ENCODE measurements at regions of chr2 and their contacts with region 1.

Region 1: GRCh38 chr2:264660-265468 is at the start of gene ACP1:
- DNase-seq: peak; percentile 94 to 100
- ATAC-seq: peak; percentile 84 to 88 (median 85)
- H3K4me3 ChIP-seq: peak within 1 kb of the TSS; percentile 94
- H3K4me3 Mint-ChIP-seq: peak within 1 kb of the TSS; percentile 98
- H3K27ac ChIP-seq: peak within 1 kb of the TSS; percentile 85
- H3K27ac Mint-ChIP-seq: peak within 1 kb of the TSS; percentile 92 to 98
- H3K4me1 ChIP-seq: peaks cover 21% of the 10 kb centered on the region
- H3K4me1 Mint-ChIP-seq: peaks cover 45 to 52% of the 10 kb centered on the region in 2 donors
- H3K27me3 ChIP-seq: no peaks in the 10 kb centered on the region
- H3K27me3 Mint-ChIP-seq: no peaks in the 10 kb centered on the region
- CTCF ChIP-seq: no peak
- total RNA-seq, gene ACP1: 87.2 to 104 (median 102) TPM

Region 2: GRCh38 chr2:254241-254640 is 10.6 kb before region 1 on chr2:
- intact Hi-C with region 1: no loop called
- DNase-seq: no peak
- ATAC-seq: no peak
- H3K4me3 ChIP-seq: no peak overlapping the region
- H3K4me3 Mint-ChIP-seq: no peak overlapping the region
- H3K27ac ChIP-seq: no peak overlapping the region
- H3K27ac Mint-ChIP-seq: no peak overlapping the region
- H3K4me1 ChIP-seq: no peaks in the 10 kb centered on the region
- H3K4me1 Mint-ChIP-seq: no peaks in the 10 kb centered on the region
- H3K27me3 ChIP-seq: no peaks in the 10 kb centered on the region
- H3K27me3 Mint-ChIP-seq: no peaks in the 10 kb centered on the region
- CTCF ChIP-seq: no peak

Region 3: GRCh38 chr2:275466-275865 is 10.6 kb after region 1 on chr2:
- intact Hi-C with region 1: no loop called
- DNase-seq: no peak
- ATAC-seq: no peak
- H3K4me3 ChIP-seq: no peak overlapping the region
- H3K4me3 Mint-ChIP-seq: no peak overlapping the region
- H3K27ac ChIP-seq: no peak overlapping the region
- H3K27ac Mint-ChIP-seq: no peak overlapping the region
- H3K4me1 ChIP-seq: peaks cover 2% of the 10 kb centered on the region
- H3K4me1 Mint-ChIP-seq: peaks cover 19 to 23% of the 10 kb centered on the region in 2 donors
- H3K27me3 ChIP-seq: no peaks in the 10 kb centered on the region
- H3K27me3 Mint-ChIP-seq: no peaks in the 10 kb centered on the region
- CTCF ChIP-seq: no peak

Region 4: DNA sequence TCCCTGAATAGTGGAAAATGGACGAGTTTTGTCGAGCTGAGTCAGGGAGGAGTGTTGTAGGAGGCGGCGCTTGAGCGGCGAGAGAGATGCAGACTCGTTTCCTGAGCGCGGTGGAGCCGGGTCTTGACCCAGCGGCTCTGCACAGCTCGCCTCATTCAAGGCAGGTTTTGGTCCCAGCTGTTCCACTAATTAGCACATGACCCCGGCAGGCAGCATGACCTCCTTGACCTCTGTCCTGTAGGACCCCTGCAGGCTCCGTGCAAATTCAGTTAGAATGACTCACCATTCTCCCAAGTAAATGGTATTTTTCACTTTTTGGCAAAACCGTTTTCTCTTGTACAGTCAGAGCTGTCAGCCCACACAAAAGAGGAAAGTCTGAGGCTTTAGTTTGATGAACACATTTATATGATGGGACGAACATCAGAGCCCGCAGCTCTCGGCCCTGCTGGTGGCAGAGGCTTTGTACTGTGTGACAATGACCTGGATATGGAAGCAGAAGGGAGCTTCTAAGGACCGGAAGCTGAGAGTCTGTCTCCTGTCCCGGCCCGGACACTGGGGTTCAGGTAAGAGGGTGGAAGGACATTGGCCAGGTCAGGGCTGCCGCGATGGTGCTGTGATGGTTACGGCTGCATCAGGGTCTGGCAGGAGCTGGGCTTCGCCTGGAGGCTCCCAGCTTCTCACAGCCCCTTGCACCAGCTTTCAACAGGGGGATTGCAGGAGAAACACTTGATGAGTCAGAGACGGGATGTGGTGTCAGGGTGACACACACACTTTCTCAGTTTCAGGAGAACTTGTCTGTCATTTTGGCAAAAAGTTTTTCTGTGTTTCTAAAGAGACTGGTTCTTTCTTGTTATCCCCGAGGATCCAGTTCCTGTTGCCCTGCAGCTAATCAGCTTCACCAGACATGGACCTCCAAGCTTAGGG is 52.9 kb after region 1 on chr2:
- intact Hi-C with region 1: no loop called
- DNase-seq: peak; percentile 28 to 59
- ATAC-seq: peak; percentile 69 to 91 (median 83)
- H3K4me3 ChIP-seq: no peak overlapping the region
- H3K4me3 Mint-ChIP-seq: peak overlapping the region; percentile 86
- H3K27ac ChIP-seq: no peak overlapping the region
- H3K27ac Mint-ChIP-seq: peak overlapping the region; percentile 65 to 80
- H3K4me1 ChIP-seq: peaks cover 23% of the 10 kb centered on the region
- H3K4me1 Mint-ChIP-seq: peaks cover 23% of the 10 kb centered on the region in 2 donors
- H3K27me3 ChIP-seq: no peaks in the 10 kb centered on the region
- H3K27me3 Mint-ChIP-seq: peaks cover 5 to 16% of the 10 kb centered on the region in 2 donors
- CTCF ChIP-seq: no peak

Region 5: GRCh38 chr2:415986-416610 is 151.2 kb after region 1 on chr2:
- intact Hi-C with region 1: no loop called
- DNase-seq: no peak
- ATAC-seq: no peak
- H3K4me3 ChIP-seq: no peak overlapping the region
- H3K4me3 Mint-ChIP-seq: no peak overlapping the region
- H3K27ac ChIP-seq: no peak overlapping the region
- H3K27ac Mint-ChIP-seq: no peak overlapping the region
- H3K4me1 ChIP-seq: peaks cover 9% of the 10 kb centered on the region
- H3K4me1 Mint-ChIP-seq: peaks cover 1 to 4% of the 10 kb centered on the region in 2 donors
- H3K27me3 ChIP-seq: no peaks in the 10 kb centered on the region
- H3K27me3 Mint-ChIP-seq: peaks cover 21 to 42% of the 10 kb centered on the region in 2 donors
- CTCF ChIP-seq: no peak

Region 6: DNA sequence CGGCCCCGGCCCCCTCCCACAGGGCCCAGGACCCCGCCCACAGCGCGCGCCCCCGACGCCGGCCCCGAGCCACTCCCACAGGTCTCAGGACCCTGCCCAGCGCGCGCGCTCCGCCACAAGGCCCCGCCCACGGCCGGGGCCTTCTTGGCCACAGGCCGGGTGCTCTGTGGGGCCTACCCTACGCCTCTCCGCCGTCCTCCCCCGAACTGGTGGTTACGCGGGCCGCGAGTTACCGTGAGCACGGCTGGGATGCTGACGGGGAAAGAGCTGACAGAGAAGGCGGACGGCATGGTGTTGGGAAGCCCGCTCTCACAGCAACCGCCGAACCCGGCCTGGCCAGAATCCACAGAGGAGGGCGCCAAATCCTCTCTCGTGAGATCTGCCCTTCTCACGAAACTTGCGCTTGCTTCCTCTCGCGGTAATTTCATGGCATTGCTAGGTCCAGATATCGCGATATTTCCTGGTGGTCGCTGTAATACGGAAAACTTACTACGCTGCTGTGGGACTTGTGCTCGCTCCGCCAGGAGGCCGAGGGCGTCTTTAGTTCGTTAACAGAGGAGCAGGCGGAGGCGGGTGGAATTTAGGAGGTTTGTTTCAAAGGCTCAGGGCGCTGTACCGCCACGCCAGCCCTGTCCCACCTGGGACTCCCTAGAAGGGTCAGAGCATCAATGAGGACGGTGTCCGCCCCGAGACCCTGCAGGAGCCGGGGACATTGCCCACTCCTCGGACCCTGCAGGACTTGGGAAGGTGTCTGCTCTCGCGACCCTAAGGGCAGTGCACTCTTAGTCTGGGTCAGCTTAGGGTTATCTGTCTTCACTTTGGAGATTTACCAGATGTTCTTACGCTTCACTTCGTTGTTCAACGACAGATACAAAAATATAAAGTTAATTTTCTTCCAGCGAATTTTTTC is 412.4 kb after region 1 on chr2 and contains the start of gene TMEM18:
- intact Hi-C with region 1: loop called (anchors 1 kb)
- DNase-seq: peak; percentile 98 to 99
- ATAC-seq: peak; percentile 78 to 92 (median 79)
- H3K4me3 ChIP-seq: peak within 1 kb of the TSS; percentile 90
- H3K4me3 Mint-ChIP-seq: peak within 1 kb of the TSS; percentile 98
- H3K27ac ChIP-seq: peak within 1 kb of the TSS; percentile 98
- H3K27ac Mint-ChIP-seq: peak within 1 kb of the TSS; percentile 98
- H3K4me1 ChIP-seq: peaks cover 16% of the 10 kb centered on the region
- H3K4me1 Mint-ChIP-seq: peaks cover 44 to 50% of the 10 kb centered on the region in 2 donors
- H3K27me3 ChIP-seq: no peaks in the 10 kb centered on the region
- H3K27me3 Mint-ChIP-seq: no peaks in the 10 kb centered on the region
- CTCF ChIP-seq: peak; percentile 48
- total RNA-seq, gene TMEM18: 22.0 to 30.8 (median 22.1) TPM